Panc1 (cell line): ENCODE measurements at regions of chr5 and their contacts with region 1.

Region 1: DNA sequence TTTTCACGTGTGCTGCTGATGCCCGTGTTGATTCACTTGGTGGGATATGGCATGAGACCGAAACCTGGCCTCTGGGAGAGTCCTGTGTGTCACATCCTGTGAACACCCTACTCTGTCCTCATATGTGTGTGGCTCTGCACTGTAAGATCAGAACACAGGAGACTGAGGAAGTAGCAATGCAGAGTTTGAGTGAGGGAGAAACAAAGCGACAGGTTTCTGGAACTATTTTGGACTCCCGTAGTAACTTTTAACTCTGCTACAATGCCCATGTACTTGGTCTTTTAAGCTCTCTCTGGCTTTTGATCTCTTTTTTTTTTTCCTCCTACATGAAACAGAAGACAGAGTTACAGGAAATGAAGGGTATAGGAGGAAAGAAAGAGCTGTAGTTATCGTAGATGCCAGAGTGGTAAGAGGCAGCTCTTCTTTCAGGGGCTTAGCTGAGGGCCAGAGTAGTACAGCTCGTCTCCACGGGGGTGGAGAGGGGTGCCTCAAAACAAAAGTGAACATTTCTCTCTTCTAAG is 26.6 kb downstream of the GRAMD2B start:
- DNase-seq: no peak
- ATAC-seq: peak; percentile 63; the same call in 1 of the 2 replicates
- H3K4me3 ChIP-seq: no peak overlapping the region
- H3K27ac ChIP-seq: no peak overlapping the region
- H3K4me1 ChIP-seq: no peaks in the 10 kb centered on the region
- H3K27me3 ChIP-seq: no peaks in the 10 kb centered on the region
- CTCF ChIP-seq: no peak

Region 2: DNA sequence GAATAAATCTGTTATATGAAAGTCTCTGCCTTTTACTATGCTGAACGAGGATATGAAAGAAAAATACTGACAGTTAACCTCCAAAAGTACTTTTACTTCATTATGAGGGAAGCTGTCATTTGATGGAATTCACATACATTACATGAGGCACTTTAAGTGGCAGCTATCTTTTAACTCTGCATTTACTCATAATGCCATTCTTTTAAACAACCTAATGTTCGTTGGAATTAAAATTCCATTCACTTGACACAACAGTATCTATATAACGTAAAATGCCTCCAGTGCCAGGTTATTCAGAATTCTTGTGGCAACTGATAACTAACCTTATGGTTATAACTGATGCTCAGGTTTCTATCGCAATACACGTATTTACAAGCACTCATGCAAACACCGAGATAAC is 403.5 kb before region 1 on chr5:
- CTCF ChIA-PET with region 1: no interaction called
- POLR2A ChIA-PET with region 1: interaction called, 10 read pairs
- in situ Hi-C with region 1: no loop called
- intact Hi-C with region 1: no loop called
- DNase-seq: no peak
- ATAC-seq: no peak
- H3K4me3 ChIP-seq: no peak overlapping the region
- H3K27ac ChIP-seq: no peak overlapping the region; the same call in 1 of the 2 replicates
- H3K4me1 ChIP-seq: no peaks in the 10 kb centered on the region
- H3K27me3 ChIP-seq: no peaks in the 10 kb centered on the region
- CTCF ChIP-seq: no peak

Region 3: GRCh38 chr5:126251024-126251423 is 198.8 kb before region 1 on chr5:
- CTCF ChIA-PET with region 1: no interaction called
- POLR2A ChIA-PET with region 1: no interaction called
- in situ Hi-C with region 1: no loop called
- intact Hi-C with region 1: no loop called
- DNase-seq: no peak
- ATAC-seq: no peak
- H3K4me3 ChIP-seq: no peak overlapping the region
- H3K27ac ChIP-seq: no peak overlapping the region
- H3K4me1 ChIP-seq: no peaks in the 10 kb centered on the region
- H3K27me3 ChIP-seq: no peaks in the 10 kb centered on the region
- CTCF ChIP-seq: no peak